OCI-LY7 (cell line): ENCODE measurements at regions of chr6 and their contacts with region 1.

Region 1: GRCh38 chr6:89371849-89372505 is 19.5 kb upstream of the UBE2J1 start:
- DNase-seq: peak; percentile 89
- H3K4me3 ChIP-seq: no peak overlapping the region
- H3K27ac ChIP-seq: peak overlapping the region; percentile 40
- H3K4me1 ChIP-seq: peaks cover 64% of the 10 kb centered on the region
- CTCF ChIP-seq: peak; percentile 100

Region 2: DNA sequence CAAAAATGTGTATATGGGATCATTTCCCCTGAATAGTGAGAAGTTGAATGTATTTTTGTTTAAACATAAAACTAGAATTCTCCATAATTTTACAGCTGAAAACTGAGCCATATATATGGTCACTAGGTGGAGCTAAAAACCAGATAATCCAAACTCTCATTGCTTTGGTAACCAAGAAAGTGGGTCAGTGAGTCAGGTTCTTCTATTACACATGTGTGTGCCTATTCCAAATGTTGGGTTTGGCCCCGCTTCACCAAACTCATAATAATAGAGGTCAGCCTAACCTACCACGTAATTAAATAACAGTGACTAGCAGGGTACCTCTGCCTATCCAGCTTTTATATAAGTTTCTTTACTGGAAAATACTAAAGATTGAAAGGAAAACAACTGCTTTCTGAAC is 389.3 kb before region 1 on chr6:
- CTCF ChIA-PET with region 1: no interaction called
- POLR2A ChIA-PET with region 1: interaction called, 3 read pairs
- intact Hi-C with region 1: loop called (anchors 2 kb)
- DNase-seq: peak; percentile 72
- H3K4me3 ChIP-seq: no peak overlapping the region
- H3K27ac ChIP-seq: no peak overlapping the region
- H3K4me1 ChIP-seq: no peaks in the 10 kb centered on the region
- CTCF ChIP-seq: peak; percentile 98

Region 3: DNA sequence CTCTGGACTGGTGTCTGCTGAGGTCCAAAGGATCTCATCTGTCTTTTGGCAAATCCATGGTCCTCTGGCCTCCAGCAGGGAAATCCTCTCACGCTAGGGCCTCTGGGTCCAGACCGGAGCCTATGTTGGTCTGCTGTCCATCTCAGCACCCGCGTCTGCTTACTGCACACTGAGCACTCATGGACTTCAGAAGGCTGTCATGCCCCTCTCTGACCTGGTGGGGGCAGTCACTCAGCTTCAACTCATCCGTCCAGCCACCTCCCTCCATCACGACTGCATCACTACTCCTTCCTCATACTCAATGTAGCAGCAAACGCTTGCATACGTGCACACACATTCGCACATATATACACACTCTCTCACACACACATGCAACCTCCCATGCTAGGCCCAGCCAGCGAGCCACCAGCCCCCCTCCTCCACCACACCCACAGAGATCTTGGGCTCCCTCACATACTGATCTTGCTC is 90.2 kb before region 1 on chr6:
- CTCF ChIA-PET with region 1: interaction called, 6 read pairs
- POLR2A ChIA-PET with region 1: no interaction called
- intact Hi-C with region 1: loop called (anchors 5 kb)
- DNase-seq: peak; percentile 58
- H3K4me3 ChIP-seq: no peak overlapping the region
- H3K27ac ChIP-seq: no peak overlapping the region
- H3K4me1 ChIP-seq: no peaks in the 10 kb centered on the region
- CTCF ChIP-seq: peak; percentile 77

Region 4: DNA sequence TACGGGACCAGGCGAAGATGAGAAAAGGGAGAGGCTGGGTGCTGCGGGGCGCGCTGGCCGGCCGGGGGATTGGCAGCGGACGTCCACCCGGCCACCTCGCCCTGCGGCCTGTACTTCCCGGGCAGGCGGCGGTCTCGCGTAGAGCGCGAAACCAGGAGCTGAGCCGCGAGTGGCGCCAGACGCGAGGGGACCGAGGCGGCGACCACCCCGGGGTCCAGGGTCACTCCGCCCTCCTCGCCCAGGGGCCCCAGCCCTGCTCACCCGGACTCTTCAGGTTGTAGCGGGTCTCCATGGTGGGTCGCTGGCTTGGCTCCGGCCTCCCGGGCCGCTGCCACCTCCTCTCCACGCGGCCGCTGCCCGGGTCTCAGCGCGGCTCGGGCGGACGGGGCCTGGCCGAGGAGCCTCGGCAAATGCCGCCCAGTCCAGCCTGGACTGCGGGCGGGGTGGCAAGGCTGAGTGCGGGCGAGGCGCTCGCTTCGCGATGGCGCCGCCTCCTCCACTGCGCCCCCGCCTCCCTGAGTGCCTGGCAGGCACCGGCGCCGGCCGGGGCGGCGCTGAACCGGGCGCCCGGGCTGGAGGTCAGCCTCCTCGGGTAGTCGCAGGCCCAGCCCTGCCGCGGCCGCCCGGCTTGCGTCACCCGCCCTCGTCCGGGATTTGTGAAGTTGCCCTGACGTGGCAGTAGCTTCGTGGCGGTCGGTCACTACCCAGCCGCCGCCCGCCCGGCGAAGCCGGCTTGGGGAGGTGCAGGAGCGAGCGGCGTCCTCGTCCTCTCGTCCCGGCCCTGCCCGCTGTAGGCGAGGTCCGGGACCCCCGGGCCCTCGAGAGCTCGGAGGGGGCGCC is 19.5 kb before region 1 on chr6 and contains the start of gene UBE2J1:
- CTCF ChIA-PET with region 1: interaction called, 5 read pairs
- POLR2A ChIA-PET with region 1: interaction called, 242 read pairs
- intact Hi-C with region 1: no loop called
- DNase-seq: peak; percentile 86
- H3K4me3 ChIP-seq: peak within 1 kb of the TSS; percentile 78
- H3K27ac ChIP-seq: peak within 1 kb of the TSS; percentile 99
- H3K4me1 ChIP-seq: peaks cover 69% of the 10 kb centered on the region
- CTCF ChIP-seq: no peak
- total RNA-seq, gene UBE2J1: 117 and 123 TPM in 2 replicates

Region 5: DNA sequence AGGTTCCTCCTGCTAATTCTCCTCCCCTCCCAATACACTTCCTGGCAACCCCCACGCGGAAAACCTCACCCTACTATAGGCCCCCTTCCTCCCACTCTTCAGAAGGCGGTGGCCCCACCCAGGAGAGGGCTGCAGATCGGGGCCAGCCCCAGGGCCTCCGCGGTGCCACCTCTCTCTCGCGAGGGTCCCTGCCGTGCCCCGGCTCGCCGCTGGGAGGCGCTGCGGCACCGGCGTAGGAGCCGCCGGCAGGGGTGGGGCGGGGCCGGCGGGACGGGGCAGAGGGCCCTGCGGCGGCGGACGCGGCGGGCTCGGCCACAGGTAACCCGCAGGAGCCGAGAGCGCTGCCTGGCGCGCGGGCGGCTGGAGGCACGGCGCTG is 60.9 kb after region 1 on chr6 and contains the start of gene ANKRD6:
- CTCF ChIA-PET with region 1: interaction called, 3 read pairs
- POLR2A ChIA-PET with region 1: no interaction called
- intact Hi-C with region 1: loop called (anchors 2 kb)
- DNase-seq: peak; percentile 79
- H3K4me3 ChIP-seq: peak within 1 kb of the TSS; percentile 70
- H3K27ac ChIP-seq: no peak within 1 kb of the TSS
- H3K4me1 ChIP-seq: peaks cover 22% of the 10 kb centered on the region
- CTCF ChIP-seq: peak; percentile 81
- total RNA-seq, gene ANKRD6: 2.2 and 2.4 TPM in 2 replicates

Region 6: GRCh38 chr6:89610149-89610642 is 238.2 kb after region 1 on chr6:
- CTCF ChIA-PET with region 1: interaction called, 4 read pairs
- POLR2A ChIA-PET with region 1: interaction called, 5 read pairs
- intact Hi-C with region 1: loop called (anchors 1 kb)
- DNase-seq: peak; percentile 72
- H3K4me3 ChIP-seq: no peak overlapping the region
- H3K27ac ChIP-seq: no peak overlapping the region
- H3K4me1 ChIP-seq: peaks cover 26% of the 10 kb centered on the region
- CTCF ChIP-seq: peak; percentile 99